ENCODE measurements at regions of chr3 and their contacts with region 1.

Region 1: GRCh38 chr3:172511783-172512762 is 11.2 kb downstream of the TNFSF10 start:
- DNase-seq: peak; percentile 63
- H3K4me3 Mint-ChIP-seq: peak overlapping the region; percentile 43
- H3K27ac Mint-ChIP-seq: peak overlapping the region; percentile 90
- H3K4me1 Mint-ChIP-seq: peaks cover 75% of the 10 kb centered on the region
- H3K27me3 Mint-ChIP-seq: no peaks in the 10 kb centered on the region

Region 2: GRCh38 chr3:171809821-171810628 is 702.0 kb before region 1 on chr3 and contains the start of gene PLD1:
- intact Hi-C with region 1: loop called (anchors 10 kb)
- DNase-seq: peak; percentile 51
- H3K4me3 Mint-ChIP-seq: peak within 1 kb of the TSS; percentile 77
- H3K27ac Mint-ChIP-seq: peak within 1 kb of the TSS; percentile 47
- H3K4me1 Mint-ChIP-seq: peaks cover 43% of the 10 kb centered on the region
- H3K27me3 Mint-ChIP-seq: peaks cover 24% of the 10 kb centered on the region
- total RNA-seq, gene PLD1: 1.0 and 1.1 TPM in 2 replicates

Region 3: GRCh38 chr3:172550347-172550943 is 38.4 kb after region 1 on chr3:
- intact Hi-C with region 1: loop called (anchors 1 kb)
- DNase-seq: peak; percentile 55
- H3K4me3 Mint-ChIP-seq: no peak overlapping the region
- H3K27ac Mint-ChIP-seq: peak overlapping the region; percentile 67
- H3K4me1 Mint-ChIP-seq: peaks cover 48% of the 10 kb centered on the region
- H3K27me3 Mint-ChIP-seq: no peaks in the 10 kb centered on the region

Region 4: DNA sequence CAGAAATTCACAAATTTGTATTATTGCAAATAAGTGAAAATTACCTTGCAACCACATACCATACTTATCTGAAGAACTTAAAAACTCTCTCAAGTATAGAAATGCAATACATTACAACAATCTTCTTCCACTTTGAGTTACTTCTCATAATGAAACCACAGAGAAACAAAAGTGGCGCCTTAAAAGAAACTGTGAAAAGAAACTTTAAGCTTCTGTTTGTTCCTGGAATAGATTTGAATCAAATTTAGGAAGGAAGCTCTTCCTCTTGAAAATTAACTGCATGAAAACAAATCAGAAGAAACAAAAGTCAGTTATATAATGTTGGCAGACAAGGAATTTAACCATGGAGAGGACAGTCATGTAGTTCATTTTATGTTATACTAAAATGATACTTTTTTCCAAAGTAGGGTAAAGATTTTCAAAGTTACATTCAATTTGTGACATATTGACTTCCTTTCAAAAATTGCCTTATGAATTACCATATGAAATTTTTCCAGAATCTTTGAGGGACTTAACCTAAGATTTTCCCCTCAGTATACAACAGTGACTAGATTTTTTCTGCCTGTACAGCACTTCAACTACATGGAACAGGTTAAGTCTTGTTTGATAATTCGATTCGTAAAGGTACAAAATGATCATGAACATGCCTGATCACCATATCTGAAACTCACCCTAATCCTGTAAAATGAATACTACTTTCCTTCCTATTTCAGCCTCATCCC is 68.8 kb after region 1 on chr3:
- intact Hi-C with region 1: loop called (anchors 1 kb)
- DNase-seq: no peak
- H3K4me3 Mint-ChIP-seq: peak overlapping the region; percentile 49
- H3K27ac Mint-ChIP-seq: peak overlapping the region; percentile 82
- H3K4me1 Mint-ChIP-seq: peaks cover 91% of the 10 kb centered on the region
- H3K27me3 Mint-ChIP-seq: no peaks in the 10 kb centered on the region